ACHN (cell line): ENCODE measurements at regions of chr20 and their contacts with region 1.

Region 1: GRCh38 chr20:48904365-48905296 is 16.9 kb upstream of the ARFGEF2 start:
- DNase-seq: peak; percentile 58

Region 2: GRCh38 chr20:48310305-48310704 is 594.3 kb before region 1 on chr20:
- in situ Hi-C with region 1: no loop called
- DNase-seq: no peak

Region 3: DNA sequence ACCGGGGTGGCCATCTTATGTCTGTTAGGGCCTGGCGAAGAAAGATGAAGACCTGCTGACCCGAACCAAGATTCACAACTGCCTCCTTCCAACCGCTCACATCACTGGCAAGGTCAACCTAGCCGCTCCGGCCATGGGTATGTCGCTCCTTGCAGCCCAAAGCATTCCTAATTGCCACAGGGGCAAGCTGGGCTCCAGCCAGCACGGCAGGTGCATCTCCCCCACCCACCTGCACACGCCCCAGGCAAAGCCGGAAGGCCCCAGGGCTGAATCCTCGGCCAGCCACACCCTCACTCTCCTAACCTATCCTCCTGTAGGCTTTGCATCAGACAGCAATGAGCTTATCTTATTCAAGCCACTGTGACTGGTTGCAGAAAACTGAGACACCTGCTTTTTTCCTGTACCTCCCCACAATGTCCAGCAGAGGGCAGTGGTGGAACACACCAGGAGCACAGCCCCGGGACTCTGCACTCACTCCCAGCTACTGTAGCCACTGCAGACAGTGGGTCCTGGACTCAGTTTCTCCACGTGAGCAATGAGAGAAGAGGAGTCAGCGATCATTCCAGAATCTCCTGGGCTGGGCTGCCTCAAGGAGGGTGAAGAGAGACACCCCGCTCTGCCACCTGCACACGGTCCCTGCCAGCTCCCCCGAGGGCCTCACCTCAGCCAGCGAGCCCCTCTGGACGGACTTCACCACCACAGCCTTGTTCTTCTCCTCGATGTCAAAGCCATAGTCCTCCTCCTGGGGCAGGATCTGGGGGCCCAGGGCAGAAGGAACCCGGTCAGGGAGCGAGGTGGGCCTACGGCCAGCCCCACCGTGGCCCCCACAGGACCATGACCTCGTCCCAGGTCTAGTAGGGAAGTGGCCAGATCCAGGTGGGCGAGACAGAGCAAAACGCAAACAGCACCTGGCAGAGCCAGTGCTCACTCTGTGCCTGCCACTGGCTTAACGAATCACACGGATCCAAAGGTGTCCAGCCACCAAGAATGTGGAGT is 246.9 kb before region 1 on chr20:
- in situ Hi-C with region 1: loop called (anchors 10 kb)
- DNase-seq: peak; percentile 65